IMR-90 (cell line): ENCODE measurements at regions of chrX and their contacts with region 1.

Region 1: DNA sequence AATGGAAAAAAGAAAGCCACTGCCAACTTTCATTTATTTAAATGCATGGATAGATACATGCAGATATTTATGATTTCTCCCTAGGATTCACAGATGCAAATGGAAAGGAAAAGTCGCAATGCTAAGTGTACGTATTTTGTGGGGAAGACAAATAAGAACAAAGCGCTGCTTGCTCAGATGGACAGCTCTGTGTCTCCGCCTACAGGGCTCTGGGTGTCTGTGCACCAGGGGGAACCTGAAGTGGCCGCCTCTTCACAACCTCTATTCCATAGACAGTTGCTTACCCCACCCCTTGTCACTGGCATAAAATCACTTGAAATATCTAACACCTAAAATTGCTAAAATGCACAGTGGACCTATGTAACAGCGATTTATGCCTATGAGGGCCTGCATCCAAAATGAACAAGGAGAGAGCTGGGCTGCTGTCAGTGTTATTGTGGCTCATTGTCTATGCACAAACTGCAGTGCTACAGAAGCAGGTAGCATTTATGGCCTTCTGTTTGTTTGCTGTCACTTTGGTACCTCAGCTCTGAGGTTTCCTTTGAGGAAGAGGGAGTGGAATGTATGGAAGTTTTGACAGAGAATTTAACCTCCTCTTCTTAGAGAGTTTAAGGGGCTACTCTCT is 58.6 kb upstream of the PAGE1 start:
- DNase-seq: peak; percentile 28
- ATAC-seq: peak; percentile 80
- H3K4me3 ChIP-seq: no peak overlapping the region
- H3K27ac ChIP-seq: no peak overlapping the region
- H3K4me1 ChIP-seq: no peaks in the 10 kb centered on the region
- H3K27me3 ChIP-seq: peaks cover 14% of the 10 kb centered on the region
- CTCF ChIP-seq: peak; percentile 54
- POLR2A ChIP-seq: no peak
- RAD21 ChIP-seq: peak; percentile 62

Region 2: DNA sequence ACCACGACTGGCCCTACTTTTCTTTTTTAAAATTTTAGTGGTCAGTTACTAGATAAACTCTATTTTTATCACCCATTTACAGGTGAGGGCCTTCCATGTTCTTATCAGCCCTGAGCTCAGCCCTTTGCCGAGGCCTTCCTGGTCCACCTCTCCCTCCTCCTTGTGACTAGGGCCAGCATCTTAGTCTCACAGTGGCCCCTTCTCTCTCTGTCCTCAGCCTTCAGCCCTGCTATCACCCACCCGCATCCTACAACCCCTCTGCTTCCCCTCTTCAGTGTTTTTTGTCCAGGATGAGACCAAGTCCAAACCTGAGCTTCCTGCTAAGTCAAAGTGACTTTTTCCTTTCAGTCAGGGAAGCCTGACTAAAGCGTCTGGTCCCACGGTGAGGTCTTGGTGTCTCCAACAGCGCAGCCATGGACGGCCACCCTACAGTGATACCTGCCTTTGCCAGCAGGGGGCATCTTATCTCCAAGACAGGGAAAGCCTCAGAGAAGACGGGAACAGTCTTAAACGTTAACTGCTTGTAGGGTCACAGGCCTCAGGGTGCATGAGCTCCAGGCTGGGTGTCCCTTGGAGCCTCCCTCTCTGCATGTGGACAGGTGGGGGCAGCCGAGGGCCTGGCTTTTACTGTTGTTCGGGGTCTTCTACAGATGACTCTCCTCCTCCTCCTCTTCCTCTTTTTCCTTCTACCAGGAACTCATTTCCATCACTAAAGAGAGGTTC is 462.6 kb before region 1 on chrX:
- CTCF ChIA-PET with region 1: no interaction called
- POLR2A ChIA-PET with region 1: no interaction called
- dilution Hi-C with region 1: no loop called
- in situ Hi-C with region 1: no loop called
- intact Hi-C with region 1: loop called (anchors 1 kb)
- DNase-seq: peak; percentile 45
- ATAC-seq: peak; percentile 90
- H3K4me3 ChIP-seq: no peak overlapping the region
- H3K27ac ChIP-seq: no peak overlapping the region
- H3K4me1 ChIP-seq: no peaks in the 10 kb centered on the region
- H3K27me3 ChIP-seq: peaks cover 3% of the 10 kb centered on the region; the same call in 1 of the 2 replicates
- CTCF ChIP-seq: peak; percentile 50
- POLR2A ChIP-seq: no peak
- RAD21 ChIP-seq: peak; percentile 35